PC-3 (cell line): ENCODE measurements at regions of chr17 and their contacts with region 1.

Region 1: GRCh38 chr17:60720763-60721531 is 43.3 kb downstream of the BCAS3 start:
- DNase-seq: peak; percentile 83
- ATAC-seq: peak; percentile 82
- H3K4me3 ChIP-seq: no peak overlapping the region
- H3K27ac ChIP-seq: no peak overlapping the region
- H3K4me1 ChIP-seq: no peaks in the 10 kb centered on the region; the same call in 1 of the 2 replicates
- H3K27me3 ChIP-seq: no peaks in the 10 kb centered on the region
- CTCF ChIP-seq: peak; percentile 99

Region 2: DNA sequence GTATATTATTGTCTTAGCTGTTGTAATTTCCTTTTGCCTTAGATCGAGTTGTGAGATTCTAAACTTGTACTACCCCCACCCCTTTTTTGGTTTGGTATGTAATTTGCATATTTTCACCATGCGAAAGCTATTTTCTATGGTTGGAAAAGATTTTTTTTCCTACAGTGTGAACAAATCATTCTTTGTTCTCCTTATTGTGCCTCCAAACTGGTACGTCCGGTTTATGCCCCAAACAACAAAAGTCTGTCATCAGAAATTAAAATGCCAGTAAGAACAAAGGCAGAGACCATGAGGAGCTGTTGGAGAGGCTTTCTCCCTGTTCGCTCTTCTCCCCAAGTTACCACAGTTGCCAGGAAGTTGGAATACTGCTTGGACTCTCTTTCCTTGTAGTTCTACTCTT is 22.9 kb after region 1 on chr17:
- CTCF ChIA-PET with region 1: interaction called, 10 read pairs
- POLR2A ChIA-PET with region 1: interaction called, 7 read pairs
- intact Hi-C with region 1: no loop called
- DNase-seq: peak; percentile 86
- ATAC-seq: peak; percentile 81
- H3K4me3 ChIP-seq: peak overlapping the region; percentile 37
- H3K27ac ChIP-seq: peak overlapping the region; percentile 66
- H3K4me1 ChIP-seq: peaks cover 19% of the 10 kb centered on the region
- H3K27me3 ChIP-seq: no peaks in the 10 kb centered on the region
- CTCF ChIP-seq: no peak

Region 3: GRCh38 chr17:60901806-60902205 is 180.9 kb after region 1 on chr17:
- CTCF ChIA-PET with region 1: interaction called, 3 read pairs
- POLR2A ChIA-PET with region 1: no interaction called
- intact Hi-C with region 1: loop called (anchors 1 kb)
- DNase-seq: peak; percentile 97
- ATAC-seq: peak; percentile 94
- H3K4me3 ChIP-seq: peak overlapping the region; percentile 34; the same call in 1 of the 2 replicates
- H3K27ac ChIP-seq: peak overlapping the region; percentile 66
- H3K4me1 ChIP-seq: peaks cover 27% of the 10 kb centered on the region
- H3K27me3 ChIP-seq: no peaks in the 10 kb centered on the region
- CTCF ChIP-seq: no peak

Region 4: DNA sequence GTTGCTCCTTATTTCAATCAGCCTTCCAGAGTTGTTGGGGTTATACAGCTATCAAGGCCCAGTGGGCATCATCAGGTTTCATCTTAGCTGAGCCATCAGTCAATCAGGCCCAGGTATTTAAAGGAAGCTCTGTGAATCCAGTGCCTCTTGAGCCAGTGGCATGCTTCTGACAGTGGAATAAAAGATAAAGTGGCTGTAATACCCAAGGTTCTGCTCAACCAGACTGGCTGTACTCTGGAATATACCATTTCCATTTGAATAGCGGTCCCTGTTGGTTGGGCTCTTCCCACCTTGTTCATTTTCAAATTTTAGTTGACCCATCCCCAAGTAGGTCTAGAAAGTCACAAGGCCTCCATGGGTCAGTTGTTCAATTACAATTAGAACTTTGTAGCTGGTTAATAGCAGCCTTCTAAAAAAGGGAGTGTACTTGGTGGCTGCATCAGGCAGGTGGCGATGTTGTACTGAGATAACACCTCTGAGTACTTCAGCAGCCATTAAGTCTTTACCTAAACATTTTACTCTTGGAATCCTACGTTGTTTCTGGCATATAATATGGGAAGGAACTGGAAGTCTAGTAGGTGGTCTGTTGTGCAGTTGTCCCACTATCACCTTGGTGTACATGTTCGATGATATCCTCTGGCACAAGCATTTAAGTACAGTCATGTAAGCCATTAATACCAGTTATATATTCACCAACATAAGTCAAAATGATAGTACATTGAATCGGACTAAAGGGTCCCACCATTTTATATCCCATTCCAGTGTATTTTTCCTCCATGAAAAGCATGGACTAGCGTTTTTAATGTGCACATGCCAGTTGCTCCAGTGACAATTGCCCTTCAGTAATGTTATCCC is 250.8 kb after region 1 on chr17:
- CTCF ChIA-PET with region 1: interaction called, 16 read pairs
- POLR2A ChIA-PET with region 1: no interaction called
- intact Hi-C with region 1: loop called (anchors 2 kb)
- DNase-seq: peak; percentile 76
- ATAC-seq: peak; percentile 97
- H3K4me3 ChIP-seq: no peak overlapping the region
- H3K27ac ChIP-seq: no peak overlapping the region
- H3K4me1 ChIP-seq: no peaks in the 10 kb centered on the region
- H3K27me3 ChIP-seq: no peaks in the 10 kb centered on the region
- CTCF ChIP-seq: peak; percentile 97

Region 5: GRCh38 chr17:61389670-61390478 is 668.9 kb after region 1 on chr17:
- CTCF ChIA-PET with region 1: interaction called, 5 read pairs
- POLR2A ChIA-PET with region 1: no interaction called
- intact Hi-C with region 1: loop called (anchors 5 kb)
- DNase-seq: peak; percentile 69
- ATAC-seq: peak; percentile 78
- H3K4me3 ChIP-seq: no peak overlapping the region
- H3K27ac ChIP-seq: no peak overlapping the region
- H3K4me1 ChIP-seq: peaks cover 3% of the 10 kb centered on the region; the same call in 1 of the 2 replicates
- H3K27me3 ChIP-seq: no peaks in the 10 kb centered on the region
- CTCF ChIP-seq: peak; percentile 99